Calu3 (cell line): ENCODE measurements at regions of chr20 and their contacts with region 1.

Region 1: DNA sequence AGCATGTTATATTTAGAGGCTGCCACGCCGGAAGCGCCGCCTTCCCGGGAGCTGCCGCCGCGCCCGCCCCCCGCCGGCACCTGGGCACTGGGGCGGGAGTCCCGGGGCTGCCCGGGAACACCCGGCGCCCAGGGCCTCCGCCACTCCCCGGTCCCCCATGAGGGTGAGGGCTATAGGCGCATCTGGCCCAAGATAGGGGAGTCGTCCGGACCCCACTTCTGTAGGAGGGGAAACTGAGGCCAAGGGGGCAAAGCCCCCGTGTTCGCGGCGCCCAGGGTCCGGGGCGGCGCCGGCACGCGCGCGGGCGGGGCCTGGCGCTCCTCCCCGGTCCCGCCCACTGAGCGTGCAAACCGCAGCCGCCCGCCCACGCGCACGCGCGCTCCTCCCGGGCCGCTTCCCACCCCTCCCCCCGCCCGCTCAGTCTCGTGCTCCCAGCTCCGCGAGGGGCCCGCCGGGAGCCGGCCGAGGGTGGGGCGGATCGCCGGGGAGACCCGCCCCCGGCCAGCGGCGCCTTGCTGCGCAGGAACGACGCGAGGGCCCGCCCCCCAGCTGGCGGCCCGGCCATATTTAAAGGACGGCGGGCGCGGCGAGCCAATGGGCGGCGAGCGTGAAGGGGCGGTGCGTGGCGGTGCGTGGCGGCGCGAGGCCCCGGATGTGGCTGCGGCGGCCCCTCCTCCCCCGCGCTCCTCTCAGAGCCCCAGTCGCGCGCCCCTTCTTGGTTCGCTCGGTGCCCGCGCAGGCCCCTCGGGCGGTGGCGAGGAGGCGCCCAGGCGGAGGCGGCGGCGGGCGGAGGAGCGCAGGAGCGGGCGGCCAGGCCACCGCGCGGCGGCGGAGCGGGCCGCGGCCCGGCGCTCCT is at the start of gene LSM14B:
- DNase-seq: peak; percentile 100
- H3K4me3 Mint-ChIP-seq: peak within 1 kb of the TSS; percentile 81
- H3K27ac Mint-ChIP-seq: peak within 1 kb of the TSS; percentile 82
- H3K4me1 Mint-ChIP-seq: peaks cover 16% of the 10 kb centered on the region
- H3K27me3 Mint-ChIP-seq: peaks cover 38% of the 10 kb centered on the region
- CTCF ChIP-seq: no peak
- total RNA-seq, gene LSM14B: 76.9 and 78.0 TPM in 2 replicates

Region 2: DNA sequence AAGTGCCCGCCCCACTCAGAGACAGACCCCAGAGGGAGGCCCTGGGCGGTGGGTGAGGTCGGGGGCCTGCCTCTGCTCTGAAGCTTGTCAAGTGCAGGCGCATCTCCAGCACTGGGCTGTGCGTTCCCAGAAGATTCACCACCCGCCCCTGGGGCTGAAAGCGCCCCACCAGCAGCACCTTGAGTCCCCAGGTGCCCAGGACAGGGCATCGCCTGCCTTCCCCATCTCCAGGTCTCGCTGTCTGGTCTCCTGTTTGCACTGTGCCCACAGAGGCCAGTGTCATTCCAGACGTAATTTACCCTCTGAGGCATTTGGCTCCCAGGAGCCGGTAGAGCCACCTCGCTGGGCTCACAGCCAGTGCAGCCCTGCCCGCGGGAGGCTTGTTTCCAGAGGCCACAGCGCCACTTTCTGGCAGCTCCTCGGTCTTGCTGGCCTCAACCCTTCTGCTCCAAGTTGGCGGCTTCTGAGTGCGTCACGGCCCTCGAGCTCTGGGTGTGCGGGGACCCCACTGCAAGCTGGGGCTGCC is 247.4 kb before region 1 on chr20:
- CTCF ChIA-PET with region 1: no interaction called
- intact Hi-C with region 1: no loop called
- DNase-seq: peak; percentile 54
- H3K4me3 Mint-ChIP-seq: no peak overlapping the region
- H3K27ac Mint-ChIP-seq: no peak overlapping the region
- H3K4me1 Mint-ChIP-seq: no peaks in the 10 kb centered on the region
- H3K27me3 Mint-ChIP-seq: peaks cover 86% of the 10 kb centered on the region
- CTCF ChIP-seq: no peak

Region 3: GRCh38 chr20:62010551-62011402 is 111.2 kb before region 1 on chr20:
- CTCF ChIA-PET with region 1: interaction called, 7 read pairs
- intact Hi-C with region 1: loop called (anchors 5 kb)
- DNase-seq: peak; percentile 76
- H3K4me3 Mint-ChIP-seq: no peak overlapping the region
- H3K27ac Mint-ChIP-seq: no peak overlapping the region
- H3K4me1 Mint-ChIP-seq: peaks cover 19% of the 10 kb centered on the region
- H3K27me3 Mint-ChIP-seq: no peaks in the 10 kb centered on the region
- CTCF ChIP-seq: peak; percentile 76

Region 4: DNA sequence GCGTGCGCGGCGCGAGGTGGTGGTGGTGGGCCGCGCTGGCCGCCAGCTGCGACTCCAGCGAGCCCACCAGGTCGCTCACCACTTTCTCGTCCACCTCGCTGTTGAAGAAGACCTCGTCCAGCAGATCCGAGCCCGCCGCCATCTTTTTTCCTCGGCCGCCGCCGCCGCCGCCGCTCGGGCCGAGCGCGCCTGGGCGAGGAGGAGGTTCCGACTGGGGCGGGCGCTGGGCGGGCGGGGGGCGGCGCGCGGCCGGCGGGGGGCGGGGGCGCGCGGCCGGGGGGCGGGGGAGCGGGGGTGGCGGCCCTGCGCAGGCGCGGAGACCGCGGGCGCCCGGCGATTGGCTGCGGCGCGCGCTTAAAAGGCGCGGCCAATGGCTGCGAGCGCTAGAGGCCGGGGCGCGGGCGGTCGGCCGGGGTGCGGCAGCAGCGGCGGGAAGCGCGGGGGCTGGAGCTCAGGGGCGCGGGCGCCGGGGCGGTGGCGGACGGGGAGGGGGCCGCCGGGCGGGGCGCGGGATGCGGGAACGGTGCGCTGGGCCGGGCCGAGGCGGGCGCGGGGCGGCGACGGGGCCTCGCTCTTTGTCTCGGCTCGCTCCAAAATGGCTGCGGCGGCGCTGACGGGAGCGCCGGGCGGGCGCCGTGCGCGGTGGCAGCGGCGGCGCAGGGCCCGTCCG is 56.2 kb before region 1 on chr20 and contains the start of gene TAF4:
- CTCF ChIA-PET with region 1: interaction called, 3 read pairs
- intact Hi-C with region 1: loop called (anchors 5 kb)
- DNase-seq: peak; percentile 82
- H3K4me3 Mint-ChIP-seq: peak within 1 kb of the TSS; percentile 77
- H3K27ac Mint-ChIP-seq: peak within 1 kb of the TSS; percentile 99
- H3K4me1 Mint-ChIP-seq: peaks cover 54% of the 10 kb centered on the region
- H3K27me3 Mint-ChIP-seq: peaks cover 12% of the 10 kb centered on the region
- CTCF ChIP-seq: no peak
- total RNA-seq, gene TAF4: 64.3 and 65.2 TPM in 2 replicates